CD4-positive, alpha-beta memory T cell (primary cell): ENCODE measurements at regions of chr22 and their contacts with region 1.

Region 1: DNA sequence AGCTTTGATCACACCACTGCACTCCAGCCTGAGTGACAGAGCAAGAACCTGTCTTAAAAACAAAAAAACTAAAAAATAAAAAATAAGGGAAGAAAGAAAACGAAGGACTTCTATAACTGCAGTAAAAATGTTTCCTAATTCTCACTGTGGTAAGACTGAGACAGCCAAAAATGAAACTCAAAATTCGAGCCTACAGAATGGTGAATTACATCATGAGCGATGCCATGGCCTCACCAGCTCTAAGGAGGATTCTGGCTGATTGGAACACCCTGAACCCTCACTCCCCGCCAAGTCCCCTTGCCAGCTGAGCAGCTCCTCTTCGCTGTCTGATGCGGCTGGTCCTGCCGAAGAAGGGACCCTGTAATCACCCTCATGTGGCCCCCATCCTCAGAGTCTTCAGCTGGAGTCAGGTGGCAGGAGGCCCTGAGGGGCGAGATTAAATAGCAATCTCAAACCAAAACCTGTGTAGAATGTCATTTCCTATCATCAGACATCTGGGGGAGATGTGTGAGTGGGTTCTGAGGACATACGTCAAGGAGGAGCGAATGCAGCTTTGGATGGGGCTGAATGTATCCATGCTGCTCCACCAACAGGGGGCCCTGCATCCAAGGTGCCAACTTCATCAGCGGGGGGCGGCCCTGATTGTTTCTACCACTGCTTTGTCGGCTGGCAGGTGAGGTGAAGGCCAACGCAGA is 29.2 kb downstream of the PDGFB start:
- DNase-seq: peak; percentile 22 to 57 (median 32)
- H3K4me3 ChIP-seq: no peak overlapping the region
- H3K4me3 Mint-ChIP-seq: no peak overlapping the region
- H3K27ac ChIP-seq: no peak overlapping the region
- H3K27ac Mint-ChIP-seq: peak overlapping the region in 2 of 7 donors; percentile 12 to 21
- H3K4me1 ChIP-seq: no peaks in the 10 kb centered on the region
- H3K4me1 Mint-ChIP-seq: peaks cover 0 to 9% (median 5%) of the 10 kb centered on the region in 4 donors
- H3K27me3 ChIP-seq: no peaks in the 10 kb centered on the region
- H3K27me3 Mint-ChIP-seq: peaks cover 4 to 12% of the 10 kb centered on the region in 2 donors

Region 2: DNA sequence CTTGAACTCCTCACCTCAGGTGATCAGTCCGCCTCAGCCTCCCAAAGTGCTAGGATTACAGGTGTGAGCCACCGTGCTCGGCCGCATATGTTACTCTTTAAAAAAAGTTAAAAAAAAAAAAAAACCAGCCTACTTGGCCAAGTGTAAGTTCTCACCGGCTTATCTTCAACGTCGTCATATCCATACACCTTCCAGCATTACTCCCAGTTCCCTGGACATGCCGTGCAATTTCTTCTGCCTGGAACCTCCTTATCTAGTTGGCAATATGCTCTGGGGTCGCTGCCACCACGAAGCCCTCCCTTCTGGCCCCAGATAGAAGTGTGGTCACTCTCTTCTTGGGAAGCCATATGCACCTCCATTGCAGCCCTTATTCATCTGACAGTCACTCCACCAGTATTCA is 26.8 kb before region 1 on chr22:
- CTCF ChIA-PET with region 1: no interaction called
- POLR2A ChIA-PET with region 1: no interaction called
- intact Hi-C with region 1: no loop called
- DNase-seq: no peak
- H3K4me3 ChIP-seq: no peak overlapping the region
- H3K4me3 Mint-ChIP-seq: no peak overlapping the region
- H3K27ac ChIP-seq: no peak overlapping the region
- H3K27ac Mint-ChIP-seq: no peak overlapping the region
- H3K4me1 ChIP-seq: no peaks in the 10 kb centered on the region
- H3K4me1 Mint-ChIP-seq: no peaks in the 10 kb centered on the region
- H3K27me3 ChIP-seq: no peaks in the 10 kb centered on the region
- H3K27me3 Mint-ChIP-seq: peaks cover 0 to 4% of the 10 kb centered on the region in 2 donors

Region 3: DNA sequence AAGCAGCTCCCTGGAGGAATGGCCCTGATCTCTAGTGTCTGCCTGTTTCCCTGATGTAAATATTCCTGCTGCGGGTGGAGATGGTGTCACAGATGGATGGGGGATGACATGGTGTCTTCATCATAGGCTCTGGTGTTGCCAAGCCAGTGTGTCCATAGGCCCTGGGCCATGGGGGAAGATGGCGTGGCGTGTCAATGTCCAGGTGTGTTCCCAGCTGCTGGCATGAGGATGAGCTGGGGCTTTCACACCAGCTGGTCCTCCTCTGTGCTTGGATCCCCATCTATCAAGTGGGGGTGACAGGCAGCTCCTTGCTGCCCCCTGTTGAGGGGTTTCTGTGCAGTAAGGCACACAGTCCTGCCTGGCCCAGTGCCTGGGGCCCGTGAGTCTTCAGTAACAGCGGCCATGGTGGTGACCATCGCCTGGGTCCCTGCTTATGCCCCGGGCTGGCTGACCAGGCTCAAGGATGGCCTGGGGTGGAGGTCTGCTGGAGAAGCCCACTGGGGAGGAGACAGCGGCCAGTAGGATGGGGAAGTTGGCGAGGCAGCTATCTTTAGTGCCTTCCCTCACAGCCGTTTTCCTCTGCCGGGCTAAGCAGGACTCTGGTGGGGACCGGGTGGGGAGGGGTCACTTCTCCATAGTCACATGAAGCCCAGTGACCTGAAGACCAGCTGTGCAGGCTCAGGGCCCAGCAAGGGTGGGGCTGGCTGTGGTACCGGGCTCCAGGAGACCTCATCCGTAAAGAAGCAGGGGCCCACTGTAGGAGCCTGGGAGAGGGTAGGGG is 91.2 kb after region 1 on chr22:
- CTCF ChIA-PET with region 1: interaction called, 13 read pairs
- POLR2A ChIA-PET with region 1: interaction called, 3 read pairs
- intact Hi-C with region 1: loop called (anchors 1 kb)
- DNase-seq: peak in 4 of 5 donors; percentile 32 to 45 (median 42)
- H3K4me3 ChIP-seq: no peak overlapping the region
- H3K4me3 Mint-ChIP-seq: no peak overlapping the region
- H3K27ac ChIP-seq: no peak overlapping the region
- H3K27ac Mint-ChIP-seq: peak overlapping the region in 1 of 7 donors; percentile 16
- H3K4me1 ChIP-seq: peaks cover 12% of the 10 kb centered on the region
- H3K4me1 Mint-ChIP-seq: peaks cover 5 to 30% (median 12%) of the 10 kb centered on the region in 4 donors
- H3K27me3 ChIP-seq: no peaks in the 10 kb centered on the region
- H3K27me3 Mint-ChIP-seq: peaks cover 0 to 2% of the 10 kb centered on the region in 2 donors